Activated CD4-positive, alpha-beta T cell treated with anti-CD3 and anti-CD28 coated beads, Interleukin-2, amount 10 ng/mL, durations not matched to agents 24 days and 14 days (primary cell): ENCODE measurements at regions of chr20 and their contacts with region 1.

Region 1: GRCh38 chr20:208942-209566 is 18.0 kb upstream of the DEFB129 start:
- DNase-seq: peak; percentile 79
- H3K4me3 Mint-ChIP-seq: no peak overlapping the region
- H3K27ac Mint-ChIP-seq: no peak overlapping the region
- H3K4me1 Mint-ChIP-seq: no peaks in the 10 kb centered on the region
- H3K27me3 Mint-ChIP-seq: peaks cover 32% of the 10 kb centered on the region

Region 2: GRCh38 chr20:235891-236290 is 26.8 kb after region 1 on chr20:
- intact Hi-C with region 1: loop called (anchors 2 kb)
- DNase-seq: peak; percentile 50
- H3K4me3 Mint-ChIP-seq: no peak overlapping the region
- H3K27ac Mint-ChIP-seq: no peak overlapping the region
- H3K4me1 Mint-ChIP-seq: peaks cover 19% of the 10 kb centered on the region
- H3K27me3 Mint-ChIP-seq: no peaks in the 10 kb centered on the region

Region 3: GRCh38 chr20:330233-331149 is 121.4 kb after region 1 on chr20:
- intact Hi-C with region 1: loop called (anchors 1 kb)
- DNase-seq: peak; percentile 88
- H3K4me3 Mint-ChIP-seq: no peak overlapping the region
- H3K27ac Mint-ChIP-seq: peak overlapping the region; percentile 12
- H3K4me1 Mint-ChIP-seq: peaks cover 15% of the 10 kb centered on the region
- H3K27me3 Mint-ChIP-seq: peaks cover 2% of the 10 kb centered on the region